K562 (cell line): ENCODE measurements at regions of chr11 and their contacts with region 1.

Region 1: GRCh38 chr11:85647604-85648299 is at the start of gene TMEM126A:
- DNase-seq: peak; percentile 71 to 97 (median 82)
- ATAC-seq: peak; percentile 94
- H3K4me3 ChIP-seq: peak within 1 kb of the TSS; percentile 54
- H3K27ac ChIP-seq: peak within 1 kb of the TSS; percentile 88
- H3K4me1 ChIP-seq: peaks cover 6 to 10% of the 10 kb centered on the region in 2 experiments; a peak in 3 of 5 replicates
- H3K27me3 ChIP-seq: no peaks in the 10 kb centered on the region
- CTCF ChIP-seq: no peak
- EP300 ChIP-seq: peak; percentile 47; the same call in 1 of the 2 replicates
- POLR2A ChIP-seq: peak; percentile 96
- RAD21 ChIP-seq: 0 out of 4 replicates have a peak, but pooled peaks of 1 of the 2 experiments have one; percentile 22
- polyA plus RNA-seq, gene TMEM126A: 148 to 154 TPM

Region 2: DNA sequence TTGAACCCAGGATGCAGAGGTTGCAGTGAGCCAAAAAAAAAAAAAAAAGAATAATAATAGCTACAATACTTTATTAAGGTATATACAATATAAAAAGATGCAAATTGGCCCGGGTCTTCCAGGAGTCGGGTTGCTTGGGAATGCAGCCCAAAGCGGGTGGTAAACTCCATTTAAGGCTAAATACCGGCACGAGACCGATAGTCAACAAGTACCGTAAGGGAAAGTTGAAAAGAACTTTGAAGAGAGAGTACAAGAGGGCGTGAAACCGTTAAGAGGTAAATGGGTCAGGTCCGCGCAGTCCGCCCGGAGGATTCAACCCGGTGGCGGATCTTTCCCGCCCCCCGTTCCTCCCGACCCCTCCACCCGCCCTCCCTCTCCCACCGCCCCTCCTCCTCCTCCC is 163.9 kb before region 1 on chr11:
- CTCF ChIA-PET with region 1: no interaction called
- POLR2A ChIA-PET with region 1: no interaction called
- in situ Hi-C with region 1: no loop called
- intact Hi-C with region 1: no loop called
- DNase-seq: no peak
- ATAC-seq: no peak
- H3K4me3 ChIP-seq: no peak overlapping the region
- H3K27ac ChIP-seq: no peak overlapping the region
- H3K4me1 ChIP-seq: no peaks in the 10 kb centered on the region
- H3K27me3 ChIP-seq: no peaks in the 10 kb centered on the region
- CTCF ChIP-seq: no peak
- EP300 ChIP-seq: no peak
- POLR2A ChIP-seq: no peak
- RAD21 ChIP-seq: no peak

Region 3: DNA sequence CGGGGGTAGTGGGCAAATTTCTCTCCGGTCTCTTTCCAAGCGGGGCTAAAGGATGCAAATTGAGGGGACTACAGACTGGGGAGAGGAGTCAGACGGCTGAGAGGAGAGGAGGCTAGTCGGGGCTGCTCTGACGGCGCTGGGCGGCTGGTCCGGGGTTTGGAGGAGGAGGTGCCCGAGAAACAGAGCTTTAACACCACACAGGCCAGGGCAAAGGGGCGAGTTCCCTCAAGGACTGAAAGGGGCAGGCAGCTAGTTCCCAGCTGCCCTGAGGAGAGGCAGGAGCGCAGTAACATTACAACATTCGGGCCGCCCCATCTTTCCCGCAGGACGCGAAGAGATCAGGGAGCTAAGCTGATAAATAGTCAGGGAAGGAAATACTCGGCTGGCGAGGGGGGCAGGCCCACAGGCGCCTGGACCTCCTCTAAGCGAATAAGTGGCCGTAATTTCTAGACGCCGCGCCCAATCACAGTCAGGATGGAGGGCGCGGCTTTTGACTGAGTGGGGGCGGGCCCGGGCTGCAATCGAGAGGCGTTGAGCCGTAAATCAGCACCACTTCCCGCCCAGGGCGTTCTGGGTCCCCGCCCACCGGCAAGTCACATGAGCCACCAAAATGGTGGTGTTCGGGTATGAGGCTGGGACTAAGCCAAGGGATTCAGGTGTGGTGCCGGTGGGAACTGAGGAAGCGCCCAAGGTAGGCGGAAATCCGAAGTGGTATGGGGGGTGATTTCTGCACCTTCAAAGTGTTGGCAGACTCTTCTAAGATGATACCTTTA is 19.6 kb before region 1 on chr11 and contains the start of gene TMEM126B:
- CTCF ChIA-PET with region 1: no interaction called
- POLR2A ChIA-PET with region 1: interaction called, 26 read pairs
- in situ Hi-C with region 1: no loop called
- intact Hi-C with region 1: no loop called
- DNase-seq: peak; percentile 89 to 98 (median 91)
- ATAC-seq: peak; percentile 99
- H3K4me3 ChIP-seq: peak within 1 kb of the TSS; percentile 70
- H3K27ac ChIP-seq: peak within 1 kb of the TSS; percentile 90
- H3K4me1 ChIP-seq: peaks cover 5 to 6% of the 10 kb centered on the region in 2 experiments; a peak in 3 of 5 replicates
- H3K27me3 ChIP-seq: no peaks in the 10 kb centered on the region
- CTCF ChIP-seq: no peak
- EP300 ChIP-seq: peak; percentile 49; the same call in 1 of the 2 replicates
- POLR2A ChIP-seq: peak; percentile 90
- RAD21 ChIP-seq: no peak
- polyA plus RNA-seq, gene TMEM126B: 209 to 226 TPM

Region 4: GRCh38 chr11:85634747-85635146 is 13.0 kb before region 1 on chr11:
- CTCF ChIA-PET with region 1: no interaction called
- POLR2A ChIA-PET with region 1: interaction called, 36 read pairs
- in situ Hi-C with region 1: no loop called
- intact Hi-C with region 1: no loop called
- DNase-seq: no peak
- ATAC-seq: no peak
- H3K4me3 ChIP-seq: no peak overlapping the region
- H3K27ac ChIP-seq: no peak overlapping the region
- H3K4me1 ChIP-seq: peaks cover 0 to 4% of the 10 kb centered on the region in 2 experiments; a peak in 2 of 5 replicates
- H3K27me3 ChIP-seq: no peaks in the 10 kb centered on the region
- CTCF ChIP-seq: no peak
- EP300 ChIP-seq: no peak
- POLR2A ChIP-seq: no peak
- RAD21 ChIP-seq: no peak